ENCODE measurements at regions of chr2 and their contacts with region 1.

Region 1: DNA sequence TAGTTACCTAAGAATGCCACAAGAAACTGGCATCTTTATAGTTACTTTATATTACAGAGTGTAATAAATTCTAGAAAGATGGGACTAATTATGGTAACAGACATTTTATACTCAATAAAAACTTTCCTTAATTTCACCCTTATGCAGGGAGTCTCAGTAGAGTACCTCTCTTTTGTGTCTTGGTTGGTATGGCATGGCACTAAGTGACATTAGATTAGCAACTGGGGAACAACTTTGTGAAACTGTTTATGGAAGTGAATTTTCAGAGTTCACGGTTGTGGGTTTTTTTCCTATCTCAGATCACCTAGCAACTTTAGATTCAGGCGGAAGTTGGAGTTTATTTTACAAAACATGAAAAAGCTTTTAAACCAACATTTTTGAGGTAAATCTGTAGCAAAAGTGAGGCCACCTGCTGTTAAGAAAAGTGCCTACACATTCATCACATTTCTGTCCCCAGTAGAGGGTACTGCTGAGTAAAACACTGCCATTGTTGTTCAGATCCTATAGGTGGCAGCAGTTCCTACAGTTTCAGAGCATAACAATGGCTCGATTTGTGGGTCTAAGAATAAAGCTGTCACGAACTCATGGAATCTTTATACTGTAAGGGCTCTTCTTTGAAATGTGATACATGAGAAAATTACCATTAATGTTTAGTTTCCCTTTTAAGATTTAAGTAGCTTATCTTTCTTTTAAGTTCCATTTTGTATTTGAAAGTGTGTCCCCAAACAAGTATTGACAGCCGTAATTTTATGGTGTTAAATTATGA is 117.6 kb downstream of the CAMKMT start:
- H3K4me3 ChIP-seq: no peak overlapping the region
- H3K27ac ChIP-seq: no peak overlapping the region
- H3K4me1 ChIP-seq: no peaks in the 10 kb centered on the region
- CTCF ChIP-seq: peak; percentile 97

Region 2: GRCh38 chr2:44392338-44392943 is 86.9 kb before region 1 on chr2:
- CTCF ChIA-PET with region 1: interaction called, 75 read pairs
- POLR2A ChIA-PET with region 1: no interaction called
- H3K4me3 ChIP-seq: no peak overlapping the region
- H3K27ac ChIP-seq: no peak overlapping the region
- H3K4me1 ChIP-seq: no peaks in the 10 kb centered on the region
- CTCF ChIP-seq: no peak

Region 3: GRCh38 chr2:44490726-44491125 is 11.4 kb after region 1 on chr2:
- CTCF ChIA-PET with region 1: interaction called, 20 read pairs
- POLR2A ChIA-PET with region 1: no interaction called
- H3K4me3 ChIP-seq: no peak overlapping the region
- H3K27ac ChIP-seq: no peak overlapping the region
- H3K4me1 ChIP-seq: no peaks in the 10 kb centered on the region
- CTCF ChIP-seq: no peak

Region 4: GRCh38 chr2:44668336-44668735 is 189.0 kb after region 1 on chr2:
- CTCF ChIA-PET with region 1: interaction called, 25 read pairs
- POLR2A ChIA-PET with region 1: no interaction called
- H3K4me3 ChIP-seq: no peak overlapping the region
- H3K27ac ChIP-seq: no peak overlapping the region
- H3K4me1 ChIP-seq: peaks cover 9% of the 10 kb centered on the region
- CTCF ChIP-seq: no peak; the same call in 1 of the 2 replicates

Region 5: DNA sequence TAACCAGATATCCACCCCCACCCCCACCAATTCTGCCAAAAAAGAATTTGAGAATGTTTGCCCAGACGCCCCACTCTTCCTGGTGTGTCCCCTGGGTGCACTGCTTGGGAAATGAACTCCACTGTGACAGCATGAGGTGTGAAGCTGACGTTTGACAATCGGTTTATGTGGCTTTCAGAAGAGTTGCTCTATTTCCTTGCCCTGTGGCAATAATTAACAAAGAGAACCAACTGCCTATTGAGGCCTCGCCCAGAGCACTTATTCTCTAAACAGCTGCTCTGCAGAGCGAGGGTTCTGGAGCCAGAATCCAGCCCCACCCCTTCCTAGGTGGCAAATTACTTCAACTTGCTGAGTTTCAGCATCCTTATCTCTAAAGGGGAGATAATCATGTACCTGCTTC is 346.4 kb after region 1 on chr2:
- CTCF ChIA-PET with region 1: interaction called, 10 read pairs
- POLR2A ChIA-PET with region 1: no interaction called
- H3K4me3 ChIP-seq: no peak overlapping the region
- H3K27ac ChIP-seq: no peak overlapping the region
- H3K4me1 ChIP-seq: 0 out of 2 replicates have a peak, but pooled peaks cover 2% of the 10 kb centered on the region
- CTCF ChIP-seq: no peak